A673 (cell line): ENCODE measurements at regions of chr15 and their contacts with region 1.

Region 1: GRCh38 chr15:51782357-51782896 is 31.0 kb downstream of the TMOD2 start:
- DNase-seq: peak; percentile 46
- H3K4me3 ChIP-seq: no peak overlapping the region
- H3K27ac ChIP-seq: no peak overlapping the region
- H3K4me1 ChIP-seq: no peaks in the 10 kb centered on the region
- H3K27me3 ChIP-seq: no peaks in the 10 kb centered on the region
- CTCF ChIP-seq: peak; percentile 61

Region 2: GRCh38 chr15:51907136-51907914 is 124.9 kb after region 1 on chr15:
- CTCF ChIA-PET with region 1: interaction called, 12 read pairs
- POLR2A ChIA-PET with region 1: no interaction called
- intact Hi-C with region 1: loop called (anchors 5 kb)
- DNase-seq: no peak
- H3K4me3 ChIP-seq: no peak overlapping the region
- H3K27ac ChIP-seq: no peak overlapping the region
- H3K4me1 ChIP-seq: no peaks in the 10 kb centered on the region
- H3K27me3 ChIP-seq: no peaks in the 10 kb centered on the region
- CTCF ChIP-seq: no peak

Region 3: DNA sequence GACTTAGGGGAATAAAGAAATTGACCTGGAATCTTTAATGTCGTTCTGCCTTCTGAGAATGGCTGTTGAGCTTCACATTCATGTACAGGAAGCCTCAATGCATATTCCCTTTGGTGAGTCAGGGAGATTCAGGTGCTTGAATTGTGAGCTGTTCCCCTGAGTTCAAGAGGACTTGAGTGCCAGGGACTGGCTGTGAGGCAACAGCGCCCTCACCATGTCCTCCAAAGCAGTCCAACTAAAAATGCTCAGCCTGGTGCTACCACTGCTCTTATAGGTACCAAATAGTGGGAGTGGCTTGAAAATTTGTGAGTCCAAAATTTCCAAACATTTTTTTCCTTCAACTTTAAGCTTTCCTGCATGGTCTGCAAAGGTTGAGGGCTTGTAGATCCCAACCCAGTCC is 135.1 kb after region 1 on chr15:
- CTCF ChIA-PET with region 1: no interaction called
- POLR2A ChIA-PET with region 1: no interaction called
- intact Hi-C with region 1: loop called (anchors 5 kb)
- DNase-seq: peak; percentile 49
- H3K4me3 ChIP-seq: no peak overlapping the region
- H3K27ac ChIP-seq: no peak overlapping the region
- H3K4me1 ChIP-seq: no peaks in the 10 kb centered on the region
- H3K27me3 ChIP-seq: no peaks in the 10 kb centered on the region
- CTCF ChIP-seq: peak; percentile 65

Region 4: GRCh38 chr15:51935466-51936104 is 153.2 kb after region 1 on chr15:
- CTCF ChIA-PET with region 1: no interaction called
- POLR2A ChIA-PET with region 1: no interaction called
- intact Hi-C with region 1: no loop called
- DNase-seq: no peak
- H3K4me3 ChIP-seq: no peak overlapping the region
- H3K27ac ChIP-seq: no peak overlapping the region
- H3K4me1 ChIP-seq: no peaks in the 10 kb centered on the region
- H3K27me3 ChIP-seq: no peaks in the 10 kb centered on the region
- CTCF ChIP-seq: no peak

Region 5: DNA sequence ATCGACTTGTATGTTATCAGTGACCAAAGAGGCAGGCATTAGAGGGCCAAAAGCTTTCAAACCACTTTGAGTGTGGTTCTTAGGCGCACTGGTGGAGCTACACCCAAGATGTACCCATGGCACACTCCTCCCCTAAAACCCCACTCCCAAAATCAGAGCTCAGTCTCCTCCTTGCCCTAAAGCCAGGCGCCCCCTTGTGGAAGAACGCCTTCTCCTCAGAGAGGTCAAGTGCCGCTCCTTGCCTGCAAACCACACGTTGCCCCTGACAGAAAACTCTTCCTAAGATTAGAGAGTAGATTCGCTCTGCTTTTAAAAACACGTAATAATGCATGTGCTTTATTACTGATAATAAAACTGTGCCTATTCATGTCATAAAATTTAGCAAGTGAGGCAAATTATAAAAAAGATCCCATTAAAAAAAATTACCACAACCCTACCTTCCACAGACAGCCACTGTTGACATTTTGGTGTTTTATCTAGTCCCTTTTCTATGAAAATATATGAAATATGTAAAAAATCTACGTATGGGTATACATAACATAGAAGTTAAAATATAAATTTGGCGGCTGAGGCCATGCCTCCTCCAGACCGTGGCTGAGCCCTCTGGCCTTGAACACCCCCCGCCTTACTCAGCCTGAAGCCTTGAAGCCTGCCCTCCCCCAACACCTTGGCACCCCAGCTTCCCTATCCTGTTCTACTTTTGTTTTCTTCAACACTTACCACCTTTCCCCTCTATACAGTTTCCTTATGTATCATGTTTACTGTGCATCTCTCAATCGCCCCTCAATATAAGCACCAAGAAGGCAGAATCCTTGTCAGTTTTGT is 296.7 kb after region 1 on chr15:
- CTCF ChIA-PET with region 1: interaction called, 3 read pairs
- POLR2A ChIA-PET with region 1: no interaction called
- intact Hi-C with region 1: loop called (anchors 5 kb)
- DNase-seq: peak; percentile 84
- H3K4me3 ChIP-seq: no peak overlapping the region
- H3K27ac ChIP-seq: no peak overlapping the region
- H3K4me1 ChIP-seq: no peaks in the 10 kb centered on the region
- H3K27me3 ChIP-seq: no peaks in the 10 kb centered on the region
- CTCF ChIP-seq: peak; percentile 95

Region 6: GRCh38 chr15:52139599-52140491 is 357.4 kb after region 1 on chr15:
- CTCF ChIA-PET with region 1: no interaction called
- POLR2A ChIA-PET with region 1: no interaction called
- intact Hi-C with region 1: loop called (anchors 10 kb)
- DNase-seq: peak; percentile 74
- H3K4me3 ChIP-seq: no peak overlapping the region
- H3K27ac ChIP-seq: peak overlapping the region; percentile 3
- H3K4me1 ChIP-seq: peaks cover 11% of the 10 kb centered on the region
- H3K27me3 ChIP-seq: no peaks in the 10 kb centered on the region
- CTCF ChIP-seq: peak; percentile 94

Region 7: GRCh38 chr15:52208306-52208946 is 426.0 kb after region 1 on chr15:
- CTCF ChIA-PET with region 1: no interaction called
- POLR2A ChIA-PET with region 1: no interaction called
- intact Hi-C with region 1: loop called (anchors 5 kb)
- DNase-seq: peak; percentile 86
- H3K4me3 ChIP-seq: no peak overlapping the region
- H3K27ac ChIP-seq: no peak overlapping the region
- H3K4me1 ChIP-seq: no peaks in the 10 kb centered on the region
- H3K27me3 ChIP-seq: no peaks in the 10 kb centered on the region
- CTCF ChIP-seq: peak; percentile 97

Region 8: DNA sequence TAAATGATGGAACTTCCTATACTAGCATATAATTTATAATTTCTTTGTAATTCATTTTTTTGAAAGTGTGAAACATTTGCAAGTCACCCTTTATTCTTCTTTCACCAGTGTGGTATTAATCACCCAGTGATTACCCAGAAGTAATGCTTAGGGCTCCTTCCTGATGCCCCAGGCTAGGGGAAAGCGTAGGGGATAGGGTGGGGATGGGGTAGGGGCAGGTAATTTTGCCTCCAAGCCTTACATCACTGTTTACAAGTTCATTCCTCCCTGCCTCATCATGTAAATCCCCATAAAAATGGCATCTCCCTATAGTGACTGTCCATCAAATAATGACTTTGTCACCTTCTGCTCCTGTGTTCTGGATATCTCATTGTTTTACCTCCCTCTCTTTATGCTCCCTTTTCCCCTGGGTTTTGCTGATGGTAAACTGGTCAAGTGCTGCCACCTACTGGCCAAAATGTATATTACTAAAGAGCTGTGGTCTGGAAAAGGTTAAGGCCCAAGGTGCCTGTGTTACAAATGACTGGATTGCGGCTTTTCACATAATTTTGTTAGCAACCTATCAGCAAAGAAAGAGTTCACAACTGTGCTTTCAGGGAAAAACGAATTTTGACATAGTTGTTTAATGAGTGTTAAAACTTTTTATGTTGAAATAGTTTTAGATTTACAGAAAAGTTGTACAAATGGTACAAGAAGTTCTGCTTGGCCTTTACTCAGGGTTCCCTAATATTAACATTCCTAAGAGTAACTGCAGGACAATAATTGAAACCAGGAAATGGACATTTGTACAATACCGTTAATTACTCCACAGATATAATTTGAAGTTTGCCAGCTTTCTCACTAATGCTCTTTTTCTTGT is 953.0 kb after region 1 on chr15:
- CTCF ChIA-PET with region 1: interaction called, 4 read pairs
- POLR2A ChIA-PET with region 1: no interaction called
- intact Hi-C with region 1: loop called (anchors 10 kb)
- DNase-seq: peak; percentile 87
- H3K4me3 ChIP-seq: no peak overlapping the region
- H3K27ac ChIP-seq: no peak overlapping the region
- H3K4me1 ChIP-seq: no peaks in the 10 kb centered on the region
- H3K27me3 ChIP-seq: no peaks in the 10 kb centered on the region
- CTCF ChIP-seq: peak; percentile 79